ENCODE measurements at regions of chr14 and their contacts with region 1.

Region 1: DNA sequence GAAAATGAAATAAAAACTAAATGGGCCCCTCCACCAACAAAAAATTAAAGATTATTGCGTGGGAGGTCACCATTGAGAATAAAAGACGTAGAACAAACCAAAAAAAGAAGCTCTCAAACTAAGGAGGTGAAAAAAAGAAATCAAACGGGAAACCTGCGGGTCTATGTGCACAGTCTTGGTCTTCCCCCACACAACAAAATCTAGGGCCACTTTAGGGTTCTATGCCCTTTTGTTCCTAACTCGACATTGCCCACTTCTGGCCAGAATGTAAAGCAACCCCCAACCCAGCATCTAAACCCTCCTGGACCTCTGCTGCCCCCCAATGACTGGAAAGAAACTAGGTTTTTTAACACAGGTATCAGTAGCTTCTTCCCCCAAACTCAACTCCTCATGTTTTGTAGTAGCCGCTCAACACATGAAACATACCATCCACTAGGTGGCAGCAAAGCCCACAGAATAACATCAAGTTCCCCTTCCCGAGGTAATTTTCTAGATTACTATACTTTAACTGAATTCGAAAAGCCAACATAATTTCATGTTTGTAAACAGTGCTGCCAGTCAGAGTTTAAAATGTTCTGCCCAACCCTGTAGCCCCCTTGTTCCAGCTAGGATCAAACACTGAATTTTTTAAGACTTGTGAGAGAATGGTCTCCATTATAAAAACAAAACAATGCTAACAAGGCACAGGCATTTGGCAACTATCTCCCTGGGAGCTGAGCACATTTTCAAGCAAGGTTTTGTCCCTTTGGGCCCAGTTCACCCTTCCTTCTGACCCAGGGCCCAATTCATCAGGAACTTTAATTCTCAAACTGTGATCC is 18.7 kb downstream of the DAD1 start:
- DNase-seq: peak; percentile 97
- ATAC-seq: peak; percentile 90
- H3K4me3 ChIP-seq: peak overlapping the region; percentile 25 to 60 (median 37)
- H3K4me3 Mint-ChIP-seq: peak overlapping the region; percentile 44
- H3K27ac ChIP-seq: peak overlapping the region; percentile 74 to 78
- H3K27ac Mint-ChIP-seq: peak overlapping the region; percentile 54
- H3K4me1 ChIP-seq: peaks cover 46 to 53% of the 10 kb centered on the region in 2 donors
- H3K4me1 Mint-ChIP-seq: peaks cover 47% of the 10 kb centered on the region
- H3K27me3 ChIP-seq: no peaks in the 10 kb centered on the region
- H3K27me3 Mint-ChIP-seq: no peaks in the 10 kb centered on the region
- CTCF ChIP-seq: peak; percentile 97

Region 2: GRCh38 chr14:22159099-22159498 is 411.2 kb before region 1 on chr14:
- CTCF ChIA-PET with region 1: no interaction called
- POLR2A ChIA-PET with region 1: no interaction called
- intact Hi-C with region 1: no loop called
- DNase-seq: no peak
- ATAC-seq: no peak
- H3K4me3 ChIP-seq: no peak overlapping the region
- H3K4me3 Mint-ChIP-seq: no peak overlapping the region
- H3K27ac ChIP-seq: no peak overlapping the region
- H3K27ac Mint-ChIP-seq: no peak overlapping the region
- H3K4me1 ChIP-seq: no peaks in the 10 kb centered on the region
- H3K4me1 Mint-ChIP-seq: peaks cover 4% of the 10 kb centered on the region
- H3K27me3 ChIP-seq: peaks cover 0 to 2% (median under 1%) of the 10 kb centered on the region in 4 experiments
- H3K27me3 Mint-ChIP-seq: peaks cover 30% of the 10 kb centered on the region
- CTCF ChIP-seq: no peak

Region 3: GRCh38 chr14:22400655-22401259 is 169.6 kb before region 1 on chr14:
- CTCF ChIA-PET with region 1: interaction called, 354 read pairs
- POLR2A ChIA-PET with region 1: interaction called, 3 read pairs
- intact Hi-C with region 1: no loop called
- DNase-seq: no peak
- ATAC-seq: no peak
- H3K4me3 ChIP-seq: no peak overlapping the region
- H3K4me3 Mint-ChIP-seq: no peak overlapping the region
- H3K27ac ChIP-seq: no peak overlapping the region
- H3K27ac Mint-ChIP-seq: no peak overlapping the region
- H3K4me1 ChIP-seq: peaks cover 7 to 9% of the 10 kb centered on the region in 2 donors
- H3K4me1 Mint-ChIP-seq: peaks cover 10% of the 10 kb centered on the region
- H3K27me3 ChIP-seq: no peaks in the 10 kb centered on the region
- H3K27me3 Mint-ChIP-seq: peaks cover 6% of the 10 kb centered on the region
- CTCF ChIP-seq: no peak

Region 4: GRCh38 chr14:22491683-22492621 is 78.4 kb before region 1 on chr14:
- CTCF ChIA-PET with region 1: interaction called, 17 read pairs
- POLR2A ChIA-PET with region 1: interaction called, 4 read pairs
- intact Hi-C with region 1: no loop called
- DNase-seq: peak; percentile 52
- ATAC-seq: peak; percentile 38
- H3K4me3 ChIP-seq: no peak overlapping the region
- H3K4me3 Mint-ChIP-seq: peak overlapping the region; percentile 30
- H3K27ac ChIP-seq: peak overlapping the region; percentile 16 to 26
- H3K27ac Mint-ChIP-seq: peak overlapping the region; percentile 86
- H3K4me1 ChIP-seq: peaks cover 25 to 71% of the 10 kb centered on the region in 2 donors
- H3K4me1 Mint-ChIP-seq: peaks cover 93% of the 10 kb centered on the region
- H3K27me3 ChIP-seq: no peaks in the 10 kb centered on the region
- H3K27me3 Mint-ChIP-seq: no peaks in the 10 kb centered on the region
- CTCF ChIP-seq: no peak

Region 5: DNA sequence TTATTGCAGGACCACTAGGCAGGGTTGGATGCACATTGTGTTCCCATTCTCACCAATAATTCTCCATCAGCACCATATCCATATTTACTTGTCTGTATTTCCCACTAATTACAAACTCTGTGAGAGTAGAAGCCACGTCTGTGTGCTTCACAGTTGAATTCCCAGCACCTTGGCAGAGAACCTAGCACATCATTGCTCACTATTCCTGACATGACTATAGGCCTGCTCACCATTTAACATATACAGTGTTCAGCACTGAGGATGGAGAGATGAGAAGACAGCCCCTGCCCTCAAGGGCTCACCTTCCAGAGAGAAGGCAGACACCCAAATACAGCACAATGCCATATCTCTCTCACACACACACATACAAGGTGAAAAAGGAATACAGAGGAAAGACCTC is 13.7 kb after region 1 on chr14:
- CTCF ChIA-PET with region 1: interaction called, 85 read pairs
- POLR2A ChIA-PET with region 1: interaction called, 7 read pairs
- intact Hi-C with region 1: loop called (anchors 1 kb)
- DNase-seq: no peak
- ATAC-seq: no peak
- H3K4me3 ChIP-seq: no peak overlapping the region
- H3K4me3 Mint-ChIP-seq: no peak overlapping the region
- H3K27ac ChIP-seq: peak overlapping the region in 1 of 2 donors; percentile 45
- H3K27ac Mint-ChIP-seq: peak overlapping the region; percentile 3
- H3K4me1 ChIP-seq: peaks cover 25 to 29% of the 10 kb centered on the region in 2 donors
- H3K4me1 Mint-ChIP-seq: peaks cover 58% of the 10 kb centered on the region
- H3K27me3 ChIP-seq: no peaks in the 10 kb centered on the region
- H3K27me3 Mint-ChIP-seq: no peaks in the 10 kb centered on the region
- CTCF ChIP-seq: no peak

Region 6: GRCh38 chr14:22748631-22749068 is 178.3 kb after region 1 on chr14:
- CTCF ChIA-PET with region 1: interaction called, 19 read pairs
- POLR2A ChIA-PET with region 1: interaction called, 3 read pairs
- intact Hi-C with region 1: no loop called
- DNase-seq: peak; percentile 71
- ATAC-seq: peak; percentile 80
- H3K4me3 ChIP-seq: peak overlapping the region in 4 of 5 experiments; percentile 8 to 58 (median 32)
- H3K4me3 Mint-ChIP-seq: peak overlapping the region; percentile 80
- H3K27ac ChIP-seq: peak overlapping the region; percentile 70 to 75
- H3K27ac Mint-ChIP-seq: peak overlapping the region; percentile 99
- H3K4me1 ChIP-seq: peaks cover 15 to 17% of the 10 kb centered on the region in 2 donors
- H3K4me1 Mint-ChIP-seq: peaks cover 20% of the 10 kb centered on the region
- H3K27me3 ChIP-seq: no peaks in the 10 kb centered on the region
- H3K27me3 Mint-ChIP-seq: no peaks in the 10 kb centered on the region
- CTCF ChIP-seq: peak; percentile 49

Region 7: GRCh38 chr14:22886500-22887259 is 316.3 kb after region 1 on chr14:
- CTCF ChIA-PET with region 1: interaction called, 24 read pairs
- POLR2A ChIA-PET with region 1: no interaction called
- intact Hi-C with region 1: no loop called
- DNase-seq: peak; percentile 89
- ATAC-seq: peak; percentile 62
- H3K4me3 ChIP-seq: peak overlapping the region; percentile 44 to 83 (median 67)
- H3K4me3 Mint-ChIP-seq: peak overlapping the region; percentile 97
- H3K27ac ChIP-seq: peak overlapping the region; percentile 85 to 94
- H3K27ac Mint-ChIP-seq: peak overlapping the region; percentile 99
- H3K4me1 ChIP-seq: peaks cover 55 to 83% of the 10 kb centered on the region in 2 donors
- H3K4me1 Mint-ChIP-seq: peaks cover 71% of the 10 kb centered on the region
- H3K27me3 ChIP-seq: no peaks in the 10 kb centered on the region
- H3K27me3 Mint-ChIP-seq: no peaks in the 10 kb centered on the region
- CTCF ChIP-seq: peak; percentile 42